ENCODE measurements at regions of chr1 and their contacts with region 1.

Region 1: DNA sequence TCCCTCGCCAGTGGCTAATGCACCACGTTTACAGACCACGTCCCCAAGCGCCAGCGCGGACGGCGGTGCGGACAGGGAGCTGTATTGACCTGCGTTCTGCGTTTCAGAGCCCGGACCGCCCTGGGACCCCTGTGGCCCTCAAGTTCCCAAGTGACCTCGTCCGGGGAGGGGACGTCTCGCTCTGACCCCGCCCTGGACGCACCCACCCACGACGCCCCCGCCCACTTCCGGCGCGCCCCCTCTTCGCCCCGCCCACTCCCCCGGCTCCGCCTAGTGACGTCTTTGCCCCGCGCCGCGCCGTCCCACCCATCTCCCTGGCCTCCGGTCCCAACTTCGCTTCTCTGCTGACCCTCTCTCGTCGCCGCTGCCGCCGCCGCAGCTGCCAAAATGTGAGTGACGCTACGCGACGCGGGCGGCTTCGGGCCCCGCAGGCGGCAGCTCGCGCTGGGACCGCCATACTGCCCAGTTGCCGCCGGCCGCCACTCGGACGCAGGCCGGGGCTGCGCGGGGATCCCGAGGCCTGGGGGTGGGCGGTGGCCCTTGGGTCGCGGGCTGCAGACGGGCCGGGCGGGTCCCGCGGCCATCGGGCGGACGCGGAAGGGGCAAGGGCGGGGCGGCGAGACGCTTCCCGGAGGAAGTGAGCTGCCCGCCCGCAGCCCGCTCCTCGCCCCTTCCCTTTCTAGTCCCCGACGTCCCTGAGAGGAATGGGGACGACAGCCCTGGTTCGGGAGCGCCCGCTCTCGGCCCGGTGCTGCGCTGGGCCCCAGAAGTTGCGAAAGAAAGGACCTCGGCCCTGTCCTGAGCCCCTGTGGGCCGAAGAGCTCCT is at the start of gene VAMP3:
- DNase-seq: peak; percentile 80
- H3K4me3 ChIP-seq: peak within 1 kb of the TSS; percentile 98
- H3K27ac ChIP-seq: no peak within 1 kb of the TSS
- H3K4me1 ChIP-seq: peaks cover 7% of the 10 kb centered on the region
- CTCF ChIP-seq: no peak
- total RNA-seq, gene VAMP3: 24.4 and 34.9 TPM in 2 replicates

Region 2: GRCh38 chr1:7961216-7962015 is 190.2 kb after region 1 on chr1 and contains the start of gene PARK7:
- CTCF ChIA-PET with region 1: no interaction called
- POLR2A ChIA-PET with region 1: no interaction called
- intact Hi-C with region 1: loop called (anchors 5 kb)
- DNase-seq: peak; percentile 99
- H3K4me3 ChIP-seq: peak within 1 kb of the TSS; percentile 84
- H3K27ac ChIP-seq: peak within 1 kb of the TSS; percentile 68
- H3K4me1 ChIP-seq: peaks cover 26% of the 10 kb centered on the region
- CTCF ChIP-seq: peak; percentile 65
- total RNA-seq, gene PARK7: 138 and 204 TPM in 2 replicates

Measured in OCI-LY7 (cell line).